Activated T-helper 2 cell treated with anti-CD3 and anti-CD28 coated beads, Interferon-gamma antibody, Interleukin-2, Interleukin-4, amounts not matched to agents 10 μg/mL and 5 μg/mL and 100 μg/mL, durations not matched to agents 14 hours and 24 hours and 36 hours (primary cell): ENCODE measurements at regions of chr1 and their contacts with region 1.

Region 1: DNA sequence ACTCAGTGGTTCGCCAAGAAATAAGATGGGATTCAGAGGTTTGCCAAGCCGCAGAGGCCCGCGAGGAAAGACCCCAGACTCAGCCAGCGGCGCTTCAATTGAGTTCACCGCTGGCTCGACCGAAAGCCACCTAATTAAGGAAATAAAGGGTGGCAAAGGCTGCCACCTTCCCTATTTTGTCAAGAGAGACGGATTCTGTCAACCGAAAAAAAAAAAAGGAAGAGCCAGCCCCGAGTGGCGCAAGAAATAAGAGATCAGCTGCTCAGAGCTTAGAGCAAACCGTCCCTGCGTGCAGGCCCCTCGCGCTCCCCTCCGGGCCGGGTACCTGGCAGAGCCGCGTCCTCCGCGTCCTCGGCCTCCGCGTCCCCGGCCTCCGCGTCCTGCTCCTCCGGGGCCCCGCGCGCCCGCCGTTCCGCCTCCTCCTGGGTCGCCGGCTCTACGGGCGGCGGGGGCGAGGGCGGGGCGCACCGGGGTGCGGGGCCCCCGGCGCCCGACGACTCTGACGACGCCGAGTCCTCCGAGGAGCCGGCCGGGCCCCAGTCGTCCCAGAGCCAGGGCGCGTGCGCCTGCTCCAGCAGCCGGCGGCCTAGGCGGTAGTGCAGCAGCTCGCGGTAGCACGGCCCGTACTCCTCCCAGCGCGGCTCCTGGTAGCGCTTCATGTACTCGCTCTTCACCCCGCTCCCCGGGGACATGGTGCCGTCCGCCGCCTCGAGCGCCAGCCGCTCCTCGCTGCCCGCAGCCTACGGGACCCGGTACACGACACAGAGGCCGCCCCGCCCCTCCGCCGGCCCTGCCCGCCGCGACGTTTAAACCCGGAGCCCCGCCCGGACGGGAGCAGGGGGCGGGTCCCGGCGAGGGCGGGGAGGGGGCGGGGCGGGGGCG is 832 bp downstream of the CCSAP start:
- DNase-seq: peak; percentile 81
- H3K4me3 Mint-ChIP-seq: peak overlapping the region; percentile 94
- H3K27ac Mint-ChIP-seq: peak overlapping the region; percentile 89
- H3K4me1 Mint-ChIP-seq: peaks cover 47% of the 10 kb centered on the region
- H3K27me3 Mint-ChIP-seq: peaks cover 14% of the 10 kb centered on the region

Region 2: GRCh38 chr1:229270547-229271447 is 71.2 kb before region 1 on chr1 and contains the start of gene RAB4A:
- intact Hi-C with region 1: loop called (anchors 2 kb)
- DNase-seq: peak; percentile 76
- H3K4me3 Mint-ChIP-seq: peak within 1 kb of the TSS; percentile 91
- H3K27ac Mint-ChIP-seq: peak within 1 kb of the TSS; percentile 65
- H3K4me1 Mint-ChIP-seq: peaks cover 30% of the 10 kb centered on the region
- H3K27me3 Mint-ChIP-seq: peaks cover 2% of the 10 kb centered on the region
- total RNA-seq, gene RAB4A: 25.7 and 30.7 TPM in 2 replicates

Region 3: GRCh38 chr1:229325853-229326502 is 16.0 kb before region 1 on chr1:
- intact Hi-C with region 1: loop called (anchors 2 kb)
- DNase-seq: no peak
- H3K4me3 Mint-ChIP-seq: peak overlapping the region; percentile 49
- H3K27ac Mint-ChIP-seq: peak overlapping the region; percentile 81
- H3K4me1 Mint-ChIP-seq: peaks cover 35% of the 10 kb centered on the region
- H3K27me3 Mint-ChIP-seq: no peaks in the 10 kb centered on the region

Region 4: DNA sequence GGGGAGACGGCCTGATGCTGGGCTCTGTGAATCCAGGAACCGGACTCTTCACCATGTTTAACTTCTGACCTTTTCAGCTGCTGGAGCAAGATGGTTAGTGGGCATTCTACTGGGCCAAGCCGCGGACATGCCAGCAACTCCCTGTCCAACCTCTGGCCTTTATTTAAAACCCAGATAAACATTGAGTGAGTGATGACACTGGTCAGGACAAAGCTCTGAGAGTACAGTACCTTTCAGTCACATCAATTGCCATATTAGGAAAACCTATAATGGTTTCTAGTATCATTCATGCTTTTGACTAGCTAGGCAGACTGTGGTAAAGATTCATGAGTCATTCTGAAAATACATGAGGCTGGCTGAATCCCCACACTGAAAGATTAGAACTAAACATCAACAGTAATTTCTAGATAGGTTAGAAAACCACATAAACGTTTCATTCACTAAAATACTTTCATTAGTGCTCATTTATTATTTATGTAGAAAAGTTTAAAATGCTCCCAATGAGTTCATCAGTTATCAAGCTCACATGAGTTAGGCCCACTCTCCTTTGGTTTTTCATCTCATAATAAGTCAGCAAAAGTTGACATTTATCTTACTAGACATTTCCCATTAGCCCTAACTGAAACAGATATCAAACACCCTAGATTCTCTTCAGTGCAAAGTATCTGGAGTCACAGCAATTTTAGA is 99.0 kb after region 1 on chr1:
- intact Hi-C with region 1: loop called (anchors 1 kb)
- DNase-seq: peak; percentile 28
- H3K4me3 Mint-ChIP-seq: no peak overlapping the region
- H3K27ac Mint-ChIP-seq: peak overlapping the region; percentile 53
- H3K4me1 Mint-ChIP-seq: peaks cover 22% of the 10 kb centered on the region
- H3K27me3 Mint-ChIP-seq: peaks cover 22% of the 10 kb centered on the region

Region 5: GRCh38 chr1:229507951-229508822 is 166.2 kb after region 1 on chr1 and contains the start of gene NUP133:
- intact Hi-C with region 1: loop called (anchors 5 kb)
- DNase-seq: peak; percentile 96
- H3K4me3 Mint-ChIP-seq: peak within 1 kb of the TSS; percentile 89
- H3K27ac Mint-ChIP-seq: peak within 1 kb of the TSS; percentile 89
- H3K4me1 Mint-ChIP-seq: peaks cover 21% of the 10 kb centered on the region
- H3K27me3 Mint-ChIP-seq: no peaks in the 10 kb centered on the region
- total RNA-seq, gene NUP133: 49.2 and 50.1 TPM in 2 replicates

Region 6: DNA sequence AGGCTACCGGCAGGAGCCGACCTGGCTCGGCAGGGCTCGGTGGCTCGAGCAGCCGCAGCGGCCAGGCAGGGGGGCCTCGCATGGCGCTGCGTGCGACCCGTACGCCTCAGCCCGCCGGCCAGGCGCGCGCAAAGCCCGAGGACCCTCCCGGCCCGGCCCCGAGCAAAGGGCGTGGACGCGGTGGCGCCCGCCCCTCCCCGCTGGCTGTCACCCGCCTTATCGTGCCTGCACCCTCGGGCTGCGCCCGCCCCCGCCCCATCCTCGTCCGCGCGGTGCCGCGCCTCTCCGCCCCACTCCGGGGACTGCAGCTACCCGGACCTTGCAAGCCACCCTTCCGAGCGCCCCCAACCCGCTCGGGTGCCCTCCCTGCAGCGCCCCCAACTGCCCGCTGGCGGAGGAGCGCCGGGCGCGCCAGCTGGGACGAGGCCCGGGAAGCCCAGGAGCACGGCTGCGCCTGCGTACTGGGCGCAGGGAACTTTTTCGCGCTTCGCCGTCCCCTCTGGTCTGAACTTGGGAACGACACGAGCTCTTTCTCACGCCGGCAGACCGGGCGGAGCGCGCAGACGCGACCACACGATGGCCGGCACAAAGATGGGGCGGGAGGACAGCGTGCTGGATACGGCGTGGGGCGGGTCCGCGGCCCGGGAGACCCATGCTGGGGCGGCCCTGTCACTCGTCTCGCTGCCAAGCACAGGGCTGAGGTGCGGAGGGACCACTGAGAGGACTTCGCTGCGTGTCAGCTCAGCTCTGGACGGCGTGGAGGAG is 216.7 kb after region 1 on chr1 and contains the start of gene ABCB10:
- intact Hi-C with region 1: loop called (anchors 1 kb)
- DNase-seq: peak; percentile 82
- H3K4me3 Mint-ChIP-seq: peak within 1 kb of the TSS; percentile 87
- H3K27ac Mint-ChIP-seq: peak within 1 kb of the TSS; percentile 80
- H3K4me1 Mint-ChIP-seq: peaks cover 34% of the 10 kb centered on the region
- H3K27me3 Mint-ChIP-seq: no peaks in the 10 kb centered on the region
- total RNA-seq, gene ABCB10: 40.1 and 42.7 TPM in 2 replicates

Region 7: DNA sequence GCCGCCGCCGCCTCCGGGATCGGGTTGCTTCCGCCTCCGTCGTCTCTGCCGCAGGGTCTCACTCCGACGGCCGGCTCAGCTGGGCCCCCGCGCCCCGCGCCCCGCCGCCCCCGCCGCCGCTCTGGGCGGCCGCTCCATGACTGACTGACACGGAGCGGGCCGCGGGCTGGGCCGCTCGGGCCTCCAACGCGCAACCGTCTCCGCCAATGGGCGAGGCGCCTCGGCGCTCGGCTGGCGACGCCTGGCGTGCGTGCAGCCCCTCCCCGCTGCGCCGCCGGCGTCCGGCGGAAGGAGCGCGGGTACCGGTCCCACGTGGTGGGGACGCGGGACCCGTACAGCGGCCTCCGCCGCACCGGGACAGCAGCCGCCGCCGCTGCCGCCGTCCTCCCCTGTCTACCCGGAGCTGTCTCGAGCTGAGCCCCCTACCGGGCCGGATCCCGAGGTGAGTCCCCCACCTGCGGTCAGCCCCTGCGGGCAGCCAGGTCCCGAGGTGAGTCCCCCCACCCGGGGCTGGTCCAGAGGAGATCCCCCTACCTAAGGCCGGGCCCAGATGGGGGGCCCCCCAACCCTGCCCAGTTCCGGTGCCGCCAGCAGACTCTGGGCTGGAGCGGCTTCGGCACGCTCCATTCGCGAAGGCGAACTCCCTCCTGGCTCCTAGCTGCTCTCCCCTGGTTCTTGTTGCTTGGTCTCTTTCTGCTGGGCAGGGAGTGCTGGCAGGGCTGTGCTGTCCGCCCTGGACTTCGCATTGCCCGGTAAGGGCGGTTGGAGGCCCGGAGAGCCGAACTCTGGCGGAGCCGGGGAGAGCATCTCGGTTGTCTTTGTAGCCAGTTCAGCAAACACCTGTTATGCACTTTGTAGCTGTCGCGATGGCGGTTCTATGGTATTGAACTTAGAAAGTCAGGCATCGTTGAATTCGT is 284.2 kb after region 1 on chr1 and contains the starts of genes TAF5L and URB2:
- intact Hi-C with region 1: loop called (anchors 5 kb)
- DNase-seq: peak; percentile 84
- H3K4me3 Mint-ChIP-seq: peak within 1 kb of the TSS; percentile 96
- H3K27ac Mint-ChIP-seq: peak within 1 kb of the TSS; percentile 85
- H3K4me1 Mint-ChIP-seq: peaks cover 49% of the 10 kb centered on the region
- H3K27me3 Mint-ChIP-seq: no peaks in the 10 kb centered on the region
- total RNA-seq, gene TAF5L: 28.3 and 28.4 TPM in 2 replicates
- total RNA-seq, gene URB2: 25.8 and 27.0 TPM in 2 replicates